IMR-90 (cell line): ENCODE measurements at regions of chr16 and their contacts with region 1.

Region 1: GRCh38 chr16:30091474-30092372 is at the start of gene TBX6:
- DNase-seq: peak; percentile 81
- ATAC-seq: peak; percentile 92
- H3K4me3 ChIP-seq: peak within 1 kb of the TSS; percentile 42
- H3K27ac ChIP-seq: peak within 1 kb of the TSS; percentile 2; the same call in 1 of the 2 replicates
- H3K4me1 ChIP-seq: peaks cover 14% of the 10 kb centered on the region
- H3K27me3 ChIP-seq: no peaks in the 10 kb centered on the region
- CTCF ChIP-seq: peak; percentile 89
- POLR2A ChIP-seq: no peak
- RAD21 ChIP-seq: peak; percentile 82
- total RNA-seq, gene TBX6: not detected in 2 replicates

Region 2: GRCh38 chr16:29995911-29996772 is 95.6 kb before region 1 on chr16 and contains the start of gene INO80E:
- CTCF ChIA-PET with region 1: no interaction called
- POLR2A ChIA-PET with region 1: no interaction called
- dilution Hi-C with region 1: no loop called
- in situ Hi-C with region 1: no loop called
- intact Hi-C with region 1: no loop called
- DNase-seq: peak; percentile 93
- ATAC-seq: peak; percentile 98
- H3K4me3 ChIP-seq: peak within 1 kb of the TSS; percentile 65
- H3K27ac ChIP-seq: peak within 1 kb of the TSS; percentile 79
- H3K4me1 ChIP-seq: peaks cover 8% of the 10 kb centered on the region
- H3K27me3 ChIP-seq: no peaks in the 10 kb centered on the region
- CTCF ChIP-seq: no peak
- POLR2A ChIP-seq: peak; percentile 69
- RAD21 ChIP-seq: peak; percentile 1; the same call in 1 of the 2 replicates
- total RNA-seq, gene INO80E: 42.1 and 42.8 TPM in 2 replicates

Region 3: GRCh38 chr16:30070031-30070462 is 21.7 kb before region 1 on chr16:
- CTCF ChIA-PET with region 1: no interaction called
- POLR2A ChIA-PET with region 1: no interaction called
- dilution Hi-C with region 1: no loop called
- in situ Hi-C with region 1: no loop called
- intact Hi-C with region 1: no loop called
- DNase-seq: no peak
- ATAC-seq: no peak
- H3K4me3 ChIP-seq: no peak overlapping the region
- H3K27ac ChIP-seq: no peak overlapping the region
- H3K4me1 ChIP-seq: peaks cover 19% of the 10 kb centered on the region
- H3K27me3 ChIP-seq: no peaks in the 10 kb centered on the region
- CTCF ChIP-seq: no peak
- POLR2A ChIP-seq: no peak
- RAD21 ChIP-seq: no peak

Region 4: GRCh38 chr16:30112197-30113030 is 20.7 kb after region 1 on chr16:
- CTCF ChIA-PET with region 1: no interaction called
- POLR2A ChIA-PET with region 1: interaction called, 10 read pairs
- dilution Hi-C with region 1: no loop called
- in situ Hi-C with region 1: no loop called
- intact Hi-C with region 1: no loop called
- DNase-seq: peak; percentile 42
- ATAC-seq: peak; percentile 65
- H3K4me3 ChIP-seq: no peak overlapping the region
- H3K27ac ChIP-seq: no peak overlapping the region
- H3K4me1 ChIP-seq: no peaks in the 10 kb centered on the region; the same call in 1 of the 2 replicates
- H3K27me3 ChIP-seq: no peaks in the 10 kb centered on the region
- CTCF ChIP-seq: peak; percentile 64
- POLR2A ChIP-seq: no peak
- RAD21 ChIP-seq: peak; percentile 73

Region 5: GRCh38 chr16:30151091-30151490 is 59.4 kb after region 1 on chr16:
- CTCF ChIA-PET with region 1: no interaction called
- POLR2A ChIA-PET with region 1: no interaction called
- dilution Hi-C with region 1: no loop called
- in situ Hi-C with region 1: loop called (anchors 5 kb)
- intact Hi-C with region 1: no loop called
- DNase-seq: no peak
- ATAC-seq: no peak
- H3K4me3 ChIP-seq: no peak overlapping the region
- H3K27ac ChIP-seq: no peak overlapping the region
- H3K4me1 ChIP-seq: no peaks in the 10 kb centered on the region
- H3K27me3 ChIP-seq: no peaks in the 10 kb centered on the region; the same call in 1 of the 2 replicates
- CTCF ChIP-seq: no peak
- POLR2A ChIP-seq: no peak
- RAD21 ChIP-seq: no peak

Region 6: GRCh38 chr16:30166202-30166902 is 74.6 kb after region 1 on chr16:
- CTCF ChIA-PET with region 1: no interaction called
- POLR2A ChIA-PET with region 1: no interaction called
- dilution Hi-C with region 1: no loop called
- in situ Hi-C with region 1: no loop called
- intact Hi-C with region 1: no loop called
- DNase-seq: no peak
- ATAC-seq: no peak
- H3K4me3 ChIP-seq: no peak overlapping the region
- H3K27ac ChIP-seq: no peak overlapping the region
- H3K4me1 ChIP-seq: no peaks in the 10 kb centered on the region
- H3K27me3 ChIP-seq: peaks cover 6% of the 10 kb centered on the region; the same call in 1 of the 2 replicates
- CTCF ChIP-seq: no peak
- POLR2A ChIP-seq: no peak
- RAD21 ChIP-seq: no peak

Region 7: DNA sequence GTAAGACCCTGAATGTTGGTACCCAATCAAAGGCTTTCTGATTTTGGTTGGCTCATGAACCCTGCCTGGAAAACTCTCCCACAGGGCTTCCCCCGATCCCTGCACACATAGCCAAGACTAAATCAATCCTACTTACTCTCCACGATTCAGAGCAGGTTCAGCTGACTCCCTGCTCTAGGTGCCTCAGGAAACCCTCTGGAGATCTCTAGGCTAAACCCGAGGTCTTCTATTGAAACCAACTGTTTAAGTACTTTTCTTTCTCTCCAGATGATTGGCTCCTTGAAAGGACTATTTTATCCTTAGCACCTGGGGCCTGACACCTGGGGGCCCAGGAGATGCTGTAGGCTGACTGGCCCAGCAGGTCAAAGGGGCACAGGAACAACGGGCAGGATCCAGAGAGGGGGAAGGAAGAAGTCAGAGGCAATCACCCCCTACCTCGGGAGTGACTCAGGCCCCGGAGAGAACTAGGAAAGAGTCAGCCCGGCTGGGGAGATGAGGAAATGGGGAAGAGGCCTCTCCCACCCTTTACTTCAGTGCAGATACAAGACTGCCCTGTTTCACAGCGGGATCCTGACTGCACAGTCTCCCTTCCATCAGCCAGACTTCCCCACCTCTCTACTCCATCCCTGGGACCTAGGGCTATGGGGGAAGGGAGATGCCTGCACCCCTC is 276.5 kb after region 1 on chr16:
- CTCF ChIA-PET with region 1: interaction called, 3 read pairs
- POLR2A ChIA-PET with region 1: no interaction called
- dilution Hi-C with region 1: no loop called
- in situ Hi-C with region 1: no loop called
- intact Hi-C with region 1: loop called (anchors 2 kb)
- DNase-seq: peak; percentile 59
- ATAC-seq: peak; percentile 4
- H3K4me3 ChIP-seq: peak overlapping the region; percentile 86
- H3K27ac ChIP-seq: peak overlapping the region; percentile 82
- H3K4me1 ChIP-seq: peaks cover 3% of the 10 kb centered on the region; the same call in 1 of the 2 replicates
- H3K27me3 ChIP-seq: no peaks in the 10 kb centered on the region
- CTCF ChIP-seq: no peak
- POLR2A ChIP-seq: peak; percentile 57; the same call in 1 of the 2 replicates
- RAD21 ChIP-seq: no peak